Endothelial cell of umbilical vein (primary cell): ENCODE measurements at regions of chr16 and their contacts with region 1.

Region 1: GRCh38 chr16:67017810-67018488 is 11.0 kb upstream of the CBFB start:
- DNase-seq: peak; percentile 89
- H3K4me3 ChIP-seq: no peak overlapping the region
- H3K27ac ChIP-seq: no peak overlapping the region
- H3K4me1 ChIP-seq: peaks cover 9% of the 10 kb centered on the region
- H3K27me3 ChIP-seq: no peaks in the 10 kb centered on the region
- CTCF ChIP-seq: peak; percentile 76 to 81
- POLR2A ChIP-seq: no peak

Region 2: DNA sequence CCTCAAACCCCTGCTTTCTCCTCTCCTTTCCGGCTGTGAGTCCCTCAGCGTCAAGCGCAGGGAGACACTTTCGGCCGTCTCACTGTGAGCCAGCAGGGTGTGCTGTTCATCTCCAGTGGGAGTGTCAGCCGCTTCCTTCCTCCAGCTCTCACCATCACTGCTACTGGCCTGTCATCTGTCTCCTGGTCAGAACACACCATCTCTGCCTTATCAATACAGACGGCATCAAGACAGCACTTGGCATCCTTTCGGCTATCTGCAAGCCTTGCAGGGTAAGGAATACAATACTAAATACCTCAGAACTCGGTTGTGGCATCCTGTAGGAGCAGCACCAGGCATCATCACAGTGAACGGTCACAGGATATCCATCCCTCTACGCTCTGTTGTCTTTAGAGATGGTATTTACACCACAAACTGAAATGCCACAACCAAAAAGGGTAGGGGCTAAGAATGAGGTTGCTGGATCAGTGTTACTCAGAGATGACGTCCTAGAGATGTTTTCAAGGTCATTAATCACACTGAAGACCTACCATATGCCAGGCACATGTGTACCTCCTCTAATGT is 300.8 kb before region 1 on chr16:
- CTCF ChIA-PET with region 1: no interaction called
- POLR2A ChIA-PET with region 1: no interaction called
- dilution Hi-C with region 1: no loop called
- intact Hi-C with region 1: no loop called
- DNase-seq: peak; percentile 16
- H3K4me3 ChIP-seq: no peak overlapping the region
- H3K27ac ChIP-seq: no peak overlapping the region
- H3K4me1 ChIP-seq: no peaks in the 10 kb centered on the region
- H3K27me3 ChIP-seq: no peaks in the 10 kb centered on the region
- CTCF ChIP-seq: peak; percentile 43 to 61
- POLR2A ChIP-seq: no peak

Region 3: DNA sequence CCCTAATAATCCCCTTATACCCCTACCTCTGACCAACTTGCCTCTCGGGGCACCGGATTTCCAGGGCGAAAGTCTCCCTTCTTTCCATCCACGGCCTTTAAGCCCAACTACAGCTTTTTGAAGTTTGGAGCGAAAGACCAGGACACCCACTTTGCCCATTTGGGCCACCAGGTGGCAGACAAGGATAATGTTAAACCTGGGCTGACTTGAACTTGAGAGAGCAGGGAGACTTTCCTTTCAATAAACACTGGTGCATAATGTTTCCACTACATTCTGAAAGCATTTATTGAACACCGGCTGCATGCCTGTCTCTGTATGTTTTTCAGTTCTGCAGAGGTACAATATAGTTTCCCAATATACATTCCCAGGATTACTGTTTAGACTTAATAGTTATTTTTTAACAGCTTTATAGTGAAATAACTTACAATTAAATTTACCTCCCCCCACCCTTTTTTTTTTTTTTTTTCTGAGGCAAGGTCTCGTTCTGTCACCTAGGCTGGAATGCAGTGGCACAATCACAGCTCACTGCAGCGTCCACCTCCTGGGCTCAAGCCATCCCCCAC is 63.8 kb before region 1 on chr16:
- CTCF ChIA-PET with region 1: interaction called, 13 read pairs
- POLR2A ChIA-PET with region 1: no interaction called
- dilution Hi-C with region 1: no loop called
- intact Hi-C with region 1: no loop called
- DNase-seq: peak; percentile 78
- H3K4me3 ChIP-seq: no peak overlapping the region
- H3K27ac ChIP-seq: no peak overlapping the region
- H3K4me1 ChIP-seq: no peaks in the 10 kb centered on the region
- H3K27me3 ChIP-seq: peaks cover 3 to 5% of the 10 kb centered on the region in 2 experiments
- CTCF ChIP-seq: peak; percentile 78 to 85
- POLR2A ChIP-seq: no peak

Region 4: GRCh38 chr16:66991545-66992077 is 26.3 kb before region 1 on chr16:
- CTCF ChIA-PET with region 1: interaction called, 16 read pairs
- POLR2A ChIA-PET with region 1: no interaction called
- dilution Hi-C with region 1: no loop called
- intact Hi-C with region 1: no loop called
- DNase-seq: no peak
- H3K4me3 ChIP-seq: no peak overlapping the region
- H3K27ac ChIP-seq: no peak overlapping the region
- H3K4me1 ChIP-seq: no peaks in the 10 kb centered on the region
- H3K27me3 ChIP-seq: no peaks in the 10 kb centered on the region
- CTCF ChIP-seq: no peak
- POLR2A ChIP-seq: no peak

Region 5: DNA sequence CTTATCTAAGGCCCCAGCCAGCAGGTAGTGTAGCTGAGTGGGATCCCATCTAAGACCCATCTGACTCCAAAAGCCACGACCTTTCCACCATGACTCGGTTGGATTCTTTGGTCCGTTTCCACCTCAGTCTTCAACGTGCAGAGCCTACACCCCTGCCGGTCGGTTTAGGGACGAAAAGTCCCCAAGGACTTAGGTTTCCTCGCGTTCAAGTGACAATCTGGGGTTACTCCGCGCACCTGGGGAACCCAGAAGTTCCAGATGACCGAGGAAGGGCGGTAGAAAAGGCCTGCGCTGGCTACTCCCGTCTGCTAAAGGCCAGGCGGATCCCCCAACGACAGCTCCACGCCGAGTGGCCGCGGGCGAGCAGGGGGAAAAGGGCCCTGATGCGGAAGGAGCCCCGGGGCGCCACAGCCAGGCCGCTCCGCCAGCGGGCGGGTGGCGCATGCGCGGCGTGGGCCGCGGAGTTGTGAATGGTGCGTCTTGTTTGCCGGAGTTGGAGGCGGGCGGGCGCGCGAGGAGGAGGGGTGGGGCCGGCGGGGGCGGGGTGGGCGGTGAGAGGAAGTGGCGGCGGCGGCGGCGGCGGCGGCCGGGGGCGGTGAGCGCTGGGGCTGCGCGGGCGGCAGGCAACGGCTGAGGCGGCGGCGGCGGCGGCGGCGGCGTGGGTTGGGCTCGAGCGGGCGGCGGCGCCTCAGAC is 10.8 kb after region 1 on chr16 and contains the start of gene CBFB:
- CTCF ChIA-PET with region 1: interaction called, 25 read pairs
- POLR2A ChIA-PET with region 1: interaction called, 7 read pairs
- dilution Hi-C with region 1: no loop called
- intact Hi-C with region 1: no loop called
- DNase-seq: peak; percentile 87
- H3K4me3 ChIP-seq: peak within 1 kb of the TSS; percentile 79 to 94 (median 91)
- H3K27ac ChIP-seq: peak within 1 kb of the TSS; percentile 92
- H3K4me1 ChIP-seq: peaks cover 28% of the 10 kb centered on the region
- H3K27me3 ChIP-seq: no peaks in the 10 kb centered on the region
- CTCF ChIP-seq: peak in 1 of 2 donors; percentile 13
- POLR2A ChIP-seq: peak; percentile 95
- total RNA-seq, gene CBFB: 103 and 113 TPM in 2 replicates

Region 6: GRCh38 chr16:67109407-67110135 is 91.6 kb after region 1 on chr16 and contains the start of gene PHAF1:
- CTCF ChIA-PET with region 1: interaction called, 86 read pairs
- POLR2A ChIA-PET with region 1: no interaction called
- dilution Hi-C with region 1: no loop called
- intact Hi-C with region 1: loop called (anchors 1 kb)
- DNase-seq: peak; percentile 94
- H3K4me3 ChIP-seq: peak within 1 kb of the TSS; percentile 82 to 92 (median 82)
- H3K27ac ChIP-seq: no peak within 1 kb of the TSS
- H3K4me1 ChIP-seq: peaks cover 10% of the 10 kb centered on the region
- H3K27me3 ChIP-seq: no peaks in the 10 kb centered on the region
- CTCF ChIP-seq: no peak
- POLR2A ChIP-seq: peak; percentile 97
- total RNA-seq, gene PHAF1: 16.1 and 18.5 TPM in 2 replicates

Region 7: DNA sequence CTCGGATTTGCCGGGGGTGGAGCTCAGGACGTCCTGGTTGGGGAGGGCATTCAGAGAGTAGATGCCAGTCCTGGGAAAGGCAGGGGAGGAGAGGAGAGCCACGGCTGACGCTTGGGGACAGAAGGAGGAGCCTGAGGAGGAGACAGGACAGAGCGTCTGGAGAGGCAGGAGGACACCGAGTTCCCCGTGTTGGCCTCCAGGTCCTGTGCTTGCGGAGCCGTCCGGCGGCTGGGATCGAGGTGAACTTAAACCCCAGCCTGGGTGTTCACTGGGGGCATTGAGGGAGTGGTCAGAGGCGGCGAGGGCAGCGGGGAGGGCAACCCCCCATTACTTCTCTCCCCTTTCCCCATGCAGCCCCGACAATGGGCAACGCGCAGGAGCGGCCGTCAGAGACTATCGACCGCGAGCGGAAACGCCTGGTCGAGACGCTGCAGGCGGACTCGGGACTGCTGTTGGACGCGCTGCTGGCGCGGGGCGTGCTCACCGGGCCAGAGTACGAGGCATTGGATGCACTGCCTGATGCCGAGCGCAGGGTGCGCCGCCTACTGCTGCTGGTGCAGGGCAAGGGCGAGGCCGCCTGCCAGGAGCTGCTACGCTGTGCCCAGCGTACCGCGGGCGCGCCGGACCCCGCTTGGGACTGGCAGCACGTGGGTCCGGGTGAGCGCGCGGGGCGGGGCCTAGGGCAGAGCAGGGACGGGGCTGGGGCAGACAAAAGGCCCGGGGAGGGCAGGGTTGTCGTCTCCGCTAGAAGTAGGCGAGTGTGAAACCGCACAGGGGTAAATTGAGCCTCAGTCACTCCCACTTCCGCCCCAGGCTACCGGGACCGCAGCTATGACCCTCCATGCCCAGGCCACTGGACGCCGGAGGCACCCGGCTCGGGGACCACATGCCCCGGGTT is 156.1 kb after region 1 on chr16:
- CTCF ChIA-PET with region 1: interaction called, 15 read pairs
- POLR2A ChIA-PET with region 1: no interaction called
- dilution Hi-C with region 1: no loop called
- intact Hi-C with region 1: no loop called
- DNase-seq: peak; percentile 90
- H3K4me3 ChIP-seq: peak overlapping the region in 2 of 3 experiments; percentile 9 to 32
- H3K27ac ChIP-seq: peak overlapping the region; percentile 4
- H3K4me1 ChIP-seq: peaks cover 27% of the 10 kb centered on the region
- H3K27me3 ChIP-seq: no peaks in the 10 kb centered on the region
- CTCF ChIP-seq: peak in 1 of 2 donors; percentile 58
- POLR2A ChIP-seq: no peak

Region 8: DNA sequence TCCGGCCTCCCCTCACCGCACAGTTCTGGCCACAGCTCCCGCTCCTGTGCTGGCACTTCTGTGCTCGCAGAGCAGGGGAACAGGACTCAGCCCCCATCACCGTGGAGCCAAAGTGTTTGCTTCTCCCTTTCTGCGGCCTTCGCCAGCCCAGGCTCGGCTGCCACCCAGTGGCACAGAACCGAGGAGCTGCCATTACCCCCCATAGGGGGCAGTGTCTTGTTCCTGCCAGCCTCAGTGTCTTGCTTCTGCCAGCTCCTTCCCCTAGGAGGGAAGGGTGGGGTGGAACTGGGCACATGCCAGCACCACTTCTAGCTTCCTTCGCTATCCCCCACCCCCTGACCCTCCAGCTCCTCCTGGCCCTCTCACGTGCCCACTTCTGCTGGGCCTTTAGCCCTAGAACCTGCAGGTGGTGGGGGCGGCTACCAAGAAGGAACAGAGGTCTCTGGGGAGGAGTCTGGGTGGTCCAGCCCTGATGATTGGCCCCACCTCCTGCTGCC is 180.3 kb after region 1 on chr16:
- CTCF ChIA-PET with region 1: interaction called, 11 read pairs
- POLR2A ChIA-PET with region 1: no interaction called
- dilution Hi-C with region 1: no loop called
- intact Hi-C with region 1: no loop called
- DNase-seq: peak; percentile 63
- H3K4me3 ChIP-seq: no peak overlapping the region
- H3K27ac ChIP-seq: no peak overlapping the region
- H3K4me1 ChIP-seq: peaks cover 12% of the 10 kb centered on the region
- H3K27me3 ChIP-seq: no peaks in the 10 kb centered on the region
- CTCF ChIP-seq: peak; percentile 92 to 96
- POLR2A ChIP-seq: no peak

Region 9: DNA sequence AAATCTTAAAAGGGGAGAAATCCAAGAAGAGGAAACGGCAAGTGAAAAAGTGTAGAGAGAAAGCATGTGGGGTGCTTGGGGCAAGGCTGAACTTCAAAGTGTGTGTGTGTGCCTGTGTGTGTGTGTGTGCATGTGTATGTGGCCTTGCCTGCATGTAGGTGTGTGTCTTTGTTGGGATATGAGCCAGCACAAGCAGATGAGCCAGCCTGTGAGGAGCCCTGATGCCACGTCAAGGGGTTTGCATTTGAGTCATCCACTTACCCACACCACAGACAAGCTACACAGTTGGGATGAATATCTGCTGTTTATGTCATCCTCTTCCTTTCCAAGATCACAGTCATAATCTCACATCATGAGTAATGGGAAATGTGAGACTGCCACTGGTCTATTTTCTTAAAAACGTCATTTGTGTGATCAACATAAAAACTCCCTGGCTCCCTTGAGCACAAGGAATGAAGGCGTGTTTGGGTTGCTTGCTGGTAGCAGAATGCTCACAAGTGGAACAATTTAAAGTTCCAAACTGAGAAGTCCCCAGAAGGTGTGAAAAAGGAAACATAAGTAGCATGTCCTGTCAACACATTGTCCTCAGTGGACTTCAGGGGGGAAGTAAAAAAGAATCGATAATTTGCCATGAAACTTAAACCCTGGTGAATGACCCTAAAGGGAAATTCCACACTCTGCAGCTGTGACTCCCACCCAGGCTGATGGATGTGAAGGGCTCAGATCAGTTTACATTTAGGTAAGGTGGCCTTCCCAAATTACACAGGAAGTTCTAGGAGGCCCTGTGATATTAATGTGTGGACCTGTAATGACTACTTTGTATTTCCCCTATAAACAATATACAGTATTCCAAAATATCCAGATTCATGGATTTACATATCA is 293.9 kb after region 1 on chr16:
- CTCF ChIA-PET with region 1: no interaction called
- POLR2A ChIA-PET with region 1: no interaction called
- dilution Hi-C with region 1: no loop called
- intact Hi-C with region 1: no loop called
- DNase-seq: peak; percentile 92
- H3K4me3 ChIP-seq: no peak overlapping the region
- H3K27ac ChIP-seq: peak overlapping the region; percentile 72
- H3K4me1 ChIP-seq: peaks cover 12% of the 10 kb centered on the region
- H3K27me3 ChIP-seq: no peaks in the 10 kb centered on the region
- CTCF ChIP-seq: no peak
- POLR2A ChIP-seq: peak; percentile 36